A549 (cell line): ENCODE measurements at regions of chr22 and their contacts with region 1.

Region 1: DNA sequence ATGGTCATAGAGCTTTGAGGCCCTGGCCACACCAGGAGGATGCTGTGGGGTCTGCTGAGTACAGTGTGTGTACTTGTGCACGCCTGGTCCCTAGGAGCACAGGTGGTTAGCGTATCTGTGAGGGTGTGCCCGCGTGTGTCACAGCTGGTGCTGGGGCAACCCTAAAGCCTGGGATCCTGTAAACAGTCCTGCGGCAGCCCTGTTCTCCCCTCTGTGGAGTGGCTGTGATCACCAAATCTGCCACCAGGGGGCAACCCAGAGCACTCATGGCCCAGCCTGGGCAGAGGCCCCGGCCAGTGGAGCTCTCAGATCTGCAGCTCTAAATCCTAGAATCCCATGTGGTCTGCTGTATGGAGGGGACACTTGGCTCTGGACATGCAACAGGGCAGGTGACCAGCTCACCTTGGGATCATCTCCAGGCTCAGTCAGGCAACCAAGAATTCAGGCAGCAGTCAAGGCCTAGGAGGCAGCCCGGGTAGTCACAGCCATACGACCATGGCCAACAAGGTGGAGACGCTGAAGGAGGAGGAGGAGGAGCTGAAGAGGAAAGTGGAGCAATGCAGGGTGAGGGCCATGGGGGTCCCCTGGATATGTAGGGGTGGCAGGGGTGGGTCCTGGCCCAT is 3.9 kb downstream of the SH3BP1 start:
- DNase-seq: peak; percentile 59 to 78
- ATAC-seq: peak; percentile 79 to 92
- H3K4me3 ChIP-seq: no peak overlapping the region
- H3K27ac ChIP-seq: 0 out of 6 replicates have a peak overlapping the region, but pooled peaks of 1 of the 2 experiments have one; percentile 26
- H3K4me1 ChIP-seq: peaks cover 10% of the 10 kb centered on the region; the same call in 2 of the 3 replicates
- CTCF ChIP-seq: peak; percentile 67
- EP300 ChIP-seq: no peak
- POLR2A ChIP-seq: no peak
- RAD21 ChIP-seq: peak; percentile 65 to 66

Region 2: GRCh38 chr22:37608477-37609239 is 34.7 kb before region 1 on chr22 and contains the start of gene GGA1:
- CTCF ChIA-PET with region 1: interaction called, 11 read pairs
- POLR2A ChIA-PET with region 1: interaction called, 3 read pairs
- DNase-seq: peak; percentile 91 to 96
- ATAC-seq: peak; percentile 86 to 88
- H3K4me3 ChIP-seq: peak within 1 kb of the TSS; percentile 76
- H3K27ac ChIP-seq: peak within 1 kb of the TSS; percentile 91 to 97
- H3K4me1 ChIP-seq: peaks cover 9% of the 10 kb centered on the region; the same call in 2 of the 3 replicates
- CTCF ChIP-seq: no peak
- EP300 ChIP-seq: no peak
- POLR2A ChIP-seq: peak; percentile 8
- RAD21 ChIP-seq: no peak
- polyA plus RNA-seq, gene GGA1: 20.5 and 22.0 TPM in 2 replicates

Region 3: DNA sequence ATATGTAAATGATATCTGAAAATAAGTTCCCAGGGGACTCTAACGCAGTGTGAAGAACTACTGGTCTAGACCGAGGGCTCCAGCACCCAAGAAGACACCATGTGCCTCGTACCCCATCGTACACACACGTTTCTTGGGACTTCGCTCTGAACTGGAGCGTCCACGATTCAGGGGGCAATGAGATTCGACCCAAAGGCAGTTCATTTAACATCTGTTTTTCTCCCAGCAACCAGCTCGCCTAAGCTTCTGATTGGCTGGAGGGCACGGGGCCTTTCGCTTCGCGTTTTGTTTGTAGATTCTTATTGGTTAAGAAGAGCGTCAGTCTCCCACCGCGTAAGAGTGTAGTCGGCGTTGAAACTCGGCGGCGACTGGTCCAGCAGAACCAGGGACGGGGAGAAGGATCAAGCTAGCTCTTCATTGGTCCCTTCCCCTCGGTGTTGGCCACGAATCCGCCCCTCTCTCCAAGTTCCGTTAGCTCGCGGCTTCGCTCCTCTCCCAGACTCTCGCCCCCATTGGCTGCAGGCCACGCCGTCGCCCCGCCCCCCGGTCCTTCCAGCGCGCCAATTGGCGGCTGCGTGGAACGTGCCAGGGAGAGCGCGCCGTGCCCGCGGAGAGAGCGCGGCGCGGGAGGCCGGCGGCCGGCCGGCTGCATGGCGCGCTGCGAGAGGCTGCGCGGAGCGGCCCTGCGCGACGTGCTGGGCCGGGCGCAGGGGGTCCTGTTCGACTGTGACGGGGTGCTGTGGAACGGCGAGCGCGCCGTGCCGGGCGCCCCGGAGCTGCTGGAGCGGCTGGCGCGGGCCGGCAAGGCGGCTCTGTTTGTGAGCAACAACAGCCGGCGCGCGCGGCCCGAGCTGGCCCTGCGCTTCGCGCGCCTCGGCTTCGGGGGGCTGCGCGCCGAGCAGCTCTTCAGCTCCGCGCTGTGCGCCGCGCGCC is 15.1 kb after region 1 on chr22 and contains the start of gene PDXP:
- CTCF ChIA-PET with region 1: interaction called, 67 read pairs
- POLR2A ChIA-PET with region 1: interaction called, 9 read pairs
- DNase-seq: peak; percentile 97 to 99
- ATAC-seq: peak; percentile 97 to 99
- H3K4me3 ChIP-seq: peak within 1 kb of the TSS; percentile 82
- H3K27ac ChIP-seq: peak within 1 kb of the TSS; percentile 77 to 92
- H3K4me1 ChIP-seq: peaks cover 15% of the 10 kb centered on the region
- CTCF ChIP-seq: no peak
- EP300 ChIP-seq: no peak
- POLR2A ChIP-seq: peak; percentile 64
- RAD21 ChIP-seq: no peak
- polyA plus RNA-seq, gene PDXP: 13.1 and 17.9 TPM in 2 replicates

Region 4: GRCh38 chr22:37676736-37677492 is 33.6 kb after region 1 on chr22:
- CTCF ChIA-PET with region 1: interaction called, 152 read pairs
- POLR2A ChIA-PET with region 1: interaction called, 9 read pairs
- DNase-seq: peak in 1 of 2 experiments; percentile 83
- ATAC-seq: peak; percentile 47 to 51
- H3K4me3 ChIP-seq: peak overlapping the region; percentile 64
- H3K27ac ChIP-seq: peak overlapping the region; percentile 93 to 97
- H3K4me1 ChIP-seq: peaks cover 33% of the 10 kb centered on the region
- CTCF ChIP-seq: no peak
- EP300 ChIP-seq: no peak
- POLR2A ChIP-seq: peak; percentile 29; the same call in 1 of the 2 replicates
- RAD21 ChIP-seq: no peak

Region 5: DNA sequence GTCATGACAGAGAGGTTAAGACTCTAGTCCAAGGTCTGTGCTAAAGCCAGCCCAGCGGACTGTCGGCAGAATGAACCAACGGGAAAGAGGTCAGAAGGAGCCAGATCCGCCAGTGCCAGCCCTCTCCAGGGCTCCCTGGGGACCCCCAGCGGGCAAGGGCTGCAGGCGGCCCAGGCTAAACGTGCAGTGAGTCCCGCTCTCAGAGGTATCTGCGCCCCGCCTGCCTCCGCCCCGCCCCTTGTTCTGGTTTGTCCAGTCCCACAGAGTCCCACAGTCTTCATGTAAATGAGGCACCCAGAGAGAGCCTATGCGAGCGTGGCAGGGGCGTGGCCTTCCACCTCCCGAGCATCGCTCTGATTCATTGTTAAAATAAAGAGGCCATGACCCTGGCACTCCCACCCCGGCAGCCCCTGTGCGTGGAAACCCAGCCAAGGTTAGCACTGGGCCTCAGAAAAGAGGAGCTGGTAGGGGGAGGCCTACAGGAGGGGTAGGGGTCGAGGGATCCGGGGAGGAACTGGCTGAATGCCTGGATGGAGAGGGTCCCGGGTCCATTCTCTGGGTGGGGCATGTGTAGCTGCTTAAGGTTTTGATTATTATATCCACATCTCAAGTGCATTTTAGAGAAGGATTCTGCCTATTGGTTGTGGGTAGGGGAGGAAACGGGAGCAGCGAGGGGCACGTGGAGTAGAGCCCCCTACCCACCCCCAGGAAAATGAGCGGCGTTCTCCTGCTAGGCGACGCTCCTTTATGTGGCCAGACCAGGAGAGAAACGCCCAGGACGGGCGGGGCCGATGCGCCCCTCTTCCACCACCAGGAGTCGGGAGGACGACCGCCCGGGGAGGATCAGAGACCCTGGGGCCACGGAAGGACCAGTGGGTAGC is 53.6 kb after region 1 on chr22 and contains the start of gene TRIOBP:
- CTCF ChIA-PET with region 1: interaction called, 12 read pairs
- POLR2A ChIA-PET with region 1: no interaction called
- DNase-seq: peak; percentile 77 to 87
- ATAC-seq: peak; percentile 96 to 99
- H3K4me3 ChIP-seq: no peak within 1 kb of the TSS
- H3K27ac ChIP-seq: peak within 1 kb of the TSS in 1 of 2 experiments; percentile 54; a peak in 2 of 6 replicates
- H3K4me1 ChIP-seq: peaks cover 6% of the 10 kb centered on the region; the same call in 1 of the 3 replicates
- CTCF ChIP-seq: no peak
- EP300 ChIP-seq: no peak
- POLR2A ChIP-seq: no peak
- RAD21 ChIP-seq: peak in 1 of 2 experiments; percentile 6; a peak in 1 of 5 replicates
- polyA plus RNA-seq, gene TRIOBP: 15.7 and 32.6 TPM in 2 replicates

Region 6: DNA sequence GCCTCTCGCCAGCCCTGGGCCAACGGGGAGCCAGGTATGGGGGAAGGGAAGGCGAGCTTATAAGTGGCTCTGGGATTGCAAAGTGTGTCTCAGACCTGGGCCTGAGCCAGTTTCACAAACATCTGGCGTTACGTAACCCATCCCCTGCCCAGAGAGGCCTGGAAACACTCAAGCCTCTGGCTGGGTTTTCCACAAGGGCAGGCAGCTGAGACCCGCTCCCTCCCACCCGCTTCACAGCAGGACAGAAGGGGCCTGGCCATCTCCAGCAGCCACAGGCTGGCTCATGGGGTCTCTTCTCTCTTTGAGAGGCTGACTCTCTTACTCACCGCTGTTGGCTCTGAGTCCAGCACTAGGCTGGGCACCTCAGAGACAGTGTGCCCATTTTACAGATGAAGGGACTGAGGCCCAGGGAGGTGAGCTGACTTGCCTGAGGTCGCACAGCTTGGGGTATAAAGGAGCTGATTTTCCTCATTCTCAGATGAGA is 98.0 kb after region 1 on chr22:
- CTCF ChIA-PET with region 1: interaction called, 10 read pairs
- POLR2A ChIA-PET with region 1: no interaction called
- DNase-seq: peak; percentile 35 to 75
- ATAC-seq: peak; percentile 6 to 14; a peak in 3 of 6 replicates
- H3K4me3 ChIP-seq: no peak overlapping the region
- H3K27ac ChIP-seq: peak overlapping the region; percentile 60 to 100; a peak in 5 of 6 replicates
- H3K4me1 ChIP-seq: peaks cover 47% of the 10 kb centered on the region
- CTCF ChIP-seq: no peak
- EP300 ChIP-seq: no peak
- POLR2A ChIP-seq: no peak
- RAD21 ChIP-seq: no peak

Region 7: DNA sequence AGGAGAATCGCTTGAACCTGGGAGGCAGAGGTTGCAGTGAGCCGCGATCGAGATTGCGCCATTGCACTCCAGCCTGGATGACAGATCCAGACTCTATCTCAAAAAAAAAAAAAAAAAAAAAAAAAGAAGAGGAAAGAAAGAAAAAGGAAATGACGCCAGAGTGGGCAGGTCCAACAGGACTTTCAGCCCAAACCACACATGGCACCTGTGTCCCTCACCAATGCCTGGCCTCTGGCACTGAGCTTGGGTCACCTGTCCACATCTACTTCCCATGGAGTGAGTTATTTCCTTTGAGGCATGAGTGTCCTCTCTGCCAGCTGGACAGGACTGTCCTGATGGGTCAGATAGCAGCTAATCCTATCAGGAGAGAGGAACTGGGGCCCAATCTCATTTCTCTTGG is 149.2 kb after region 1 on chr22:
- CTCF ChIA-PET with region 1: interaction called, 102 read pairs
- POLR2A ChIA-PET with region 1: interaction called, 4 read pairs
- DNase-seq: no peak
- ATAC-seq: no peak
- H3K4me3 ChIP-seq: no peak overlapping the region
- H3K27ac ChIP-seq: no peak overlapping the region
- H3K4me1 ChIP-seq: no peaks in the 10 kb centered on the region
- CTCF ChIP-seq: no peak
- EP300 ChIP-seq: no peak
- POLR2A ChIP-seq: no peak
- RAD21 ChIP-seq: no peak

Region 8: GRCh38 chr22:38080850-38081635 is 437.7 kb after region 1 on chr22:
- CTCF ChIA-PET with region 1: no interaction called
- POLR2A ChIA-PET with region 1: no interaction called
- DNase-seq: no peak
- ATAC-seq: no peak
- H3K4me3 ChIP-seq: no peak overlapping the region
- H3K27ac ChIP-seq: no peak overlapping the region
- H3K4me1 ChIP-seq: no peaks in the 10 kb centered on the region
- CTCF ChIP-seq: no peak
- EP300 ChIP-seq: no peak
- POLR2A ChIP-seq: no peak
- RAD21 ChIP-seq: no peak